CD4-positive, alpha-beta memory T cell (primary cell): ENCODE measurements at regions of chr9 and their contacts with region 1.

Region 1: DNA sequence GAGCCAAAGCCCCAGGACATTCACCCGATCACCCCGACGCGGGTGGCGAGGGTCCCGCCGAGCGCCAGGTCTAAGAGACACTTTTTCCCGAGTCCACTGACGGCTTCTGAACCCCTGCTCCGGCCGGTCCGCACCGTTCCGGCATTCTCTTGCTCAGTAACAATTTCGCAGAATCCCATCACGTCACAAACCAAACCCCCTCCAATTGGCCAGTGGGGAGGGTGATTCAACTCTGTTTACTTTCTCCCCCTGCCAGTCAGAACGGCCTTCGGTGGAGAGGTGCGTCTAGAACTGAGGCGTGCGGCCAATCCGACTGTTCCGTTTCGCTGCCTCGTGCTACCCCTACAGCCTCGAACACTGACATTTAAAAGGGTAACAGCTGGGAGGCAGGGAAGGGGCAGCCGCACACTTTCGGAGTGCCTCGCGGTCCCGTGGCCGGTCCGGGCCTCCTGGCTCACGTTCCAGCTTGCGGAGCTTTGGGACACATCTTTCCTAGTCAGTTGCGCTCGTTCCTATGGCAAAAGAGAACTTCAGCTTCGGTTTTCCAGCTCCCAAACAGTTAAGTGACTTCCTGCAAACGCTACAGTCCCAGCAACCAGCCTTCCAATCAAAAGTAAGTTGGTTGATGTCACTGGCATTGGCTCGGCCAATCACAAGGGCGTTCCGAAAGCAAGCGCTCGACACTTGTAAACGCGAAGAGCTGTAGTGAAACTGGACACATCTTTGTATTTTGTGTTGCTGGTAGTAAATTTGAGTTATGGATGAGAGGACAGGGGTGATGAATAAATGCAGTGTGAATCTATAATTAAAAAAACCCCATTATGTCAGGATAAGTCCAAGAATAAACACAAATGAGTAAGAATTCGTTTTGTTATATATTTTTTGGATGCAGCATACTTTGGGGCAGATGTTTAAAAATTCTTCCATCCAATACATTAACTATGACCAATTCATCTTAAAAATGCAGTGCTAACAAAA is at the start of gene KLF9:
- DNase-seq: peak; percentile 95 to 97 (median 96)
- H3K4me3 ChIP-seq: peak within 1 kb of the TSS in 1 of 2 donors; percentile 95
- H3K4me3 Mint-ChIP-seq: peak within 1 kb of the TSS; percentile 94 to 100 (median 96)
- H3K27ac ChIP-seq: peak within 1 kb of the TSS; percentile 98
- H3K27ac Mint-ChIP-seq: peak within 1 kb of the TSS; percentile 99 to 100 (median 100)
- H3K4me1 ChIP-seq: peaks cover 50% of the 10 kb centered on the region
- H3K4me1 Mint-ChIP-seq: peaks cover 28 to 63% (median 45%) of the 10 kb centered on the region in 4 donors
- H3K27me3 ChIP-seq: no peaks in the 10 kb centered on the region
- H3K27me3 Mint-ChIP-seq: peaks cover 0 to 2% of the 10 kb centered on the region in 2 donors
- total RNA-seq, gene KLF9: 18.6 to 20.6 TPM

Region 2: DNA sequence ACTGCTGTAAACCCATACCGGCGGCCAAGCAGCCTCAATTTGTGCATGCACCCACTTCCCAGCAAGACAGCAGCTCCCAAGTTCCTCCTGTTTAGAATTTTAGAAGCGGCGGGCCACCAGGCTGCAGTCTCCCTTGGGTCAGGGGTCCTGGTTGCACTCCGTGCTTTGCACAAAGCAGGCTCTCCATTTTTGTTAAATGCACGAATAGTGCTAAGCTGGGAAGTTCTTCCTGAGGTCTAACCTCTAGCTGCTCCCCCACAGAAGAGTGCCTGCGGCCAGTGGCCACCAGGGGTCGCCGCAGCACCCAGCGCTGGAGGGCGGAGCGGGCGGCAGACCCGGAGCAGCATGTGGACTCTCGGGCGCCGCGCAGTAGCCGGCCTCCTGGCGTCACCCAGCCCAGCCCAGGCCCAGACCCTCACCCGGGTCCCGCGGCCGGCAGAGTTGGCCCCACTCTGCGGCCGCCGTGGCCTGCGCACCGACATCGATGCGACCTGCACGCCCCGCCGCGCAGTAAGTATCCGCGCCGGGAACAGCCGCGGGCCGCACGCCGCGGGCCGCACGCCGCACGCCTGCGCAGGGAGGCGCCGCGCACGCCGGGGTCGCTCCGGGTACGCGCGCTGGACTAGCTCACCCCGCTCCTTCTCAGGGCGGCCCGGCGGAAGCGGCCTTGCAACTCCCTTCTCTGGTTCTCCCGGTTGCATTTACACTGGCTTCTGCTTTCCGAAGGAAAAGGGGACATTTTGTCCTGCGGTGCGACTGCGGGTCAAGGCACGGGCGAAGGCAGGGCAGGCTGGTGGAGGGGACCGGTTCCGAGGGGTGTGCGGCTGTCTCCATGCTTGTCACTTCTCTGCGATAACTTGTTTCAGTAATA is 1378.4 kb before region 1 on chr9 and contains the start of gene FXN:
- CTCF ChIA-PET with region 1: no interaction called
- POLR2A ChIA-PET with region 1: no interaction called
- intact Hi-C with region 1: loop called (anchors 10 kb)
- DNase-seq: peak; percentile 71 to 82 (median 78)
- H3K4me3 ChIP-seq: peak within 1 kb of the TSS; percentile 78 to 86
- H3K4me3 Mint-ChIP-seq: peak within 1 kb of the TSS; percentile 95 to 99 (median 98)
- H3K27ac ChIP-seq: peak within 1 kb of the TSS; percentile 60
- H3K27ac Mint-ChIP-seq: peak within 1 kb of the TSS; percentile 87 to 96 (median 94)
- H3K4me1 ChIP-seq: peaks cover 23% of the 10 kb centered on the region
- H3K4me1 Mint-ChIP-seq: peaks cover 18 to 36% (median 23%) of the 10 kb centered on the region in 4 donors
- H3K27me3 ChIP-seq: no peaks in the 10 kb centered on the region
- H3K27me3 Mint-ChIP-seq: no peaks in the 10 kb centered on the region
- total RNA-seq, gene FXN: 14.6 to 15.9 TPM

Region 3: DNA sequence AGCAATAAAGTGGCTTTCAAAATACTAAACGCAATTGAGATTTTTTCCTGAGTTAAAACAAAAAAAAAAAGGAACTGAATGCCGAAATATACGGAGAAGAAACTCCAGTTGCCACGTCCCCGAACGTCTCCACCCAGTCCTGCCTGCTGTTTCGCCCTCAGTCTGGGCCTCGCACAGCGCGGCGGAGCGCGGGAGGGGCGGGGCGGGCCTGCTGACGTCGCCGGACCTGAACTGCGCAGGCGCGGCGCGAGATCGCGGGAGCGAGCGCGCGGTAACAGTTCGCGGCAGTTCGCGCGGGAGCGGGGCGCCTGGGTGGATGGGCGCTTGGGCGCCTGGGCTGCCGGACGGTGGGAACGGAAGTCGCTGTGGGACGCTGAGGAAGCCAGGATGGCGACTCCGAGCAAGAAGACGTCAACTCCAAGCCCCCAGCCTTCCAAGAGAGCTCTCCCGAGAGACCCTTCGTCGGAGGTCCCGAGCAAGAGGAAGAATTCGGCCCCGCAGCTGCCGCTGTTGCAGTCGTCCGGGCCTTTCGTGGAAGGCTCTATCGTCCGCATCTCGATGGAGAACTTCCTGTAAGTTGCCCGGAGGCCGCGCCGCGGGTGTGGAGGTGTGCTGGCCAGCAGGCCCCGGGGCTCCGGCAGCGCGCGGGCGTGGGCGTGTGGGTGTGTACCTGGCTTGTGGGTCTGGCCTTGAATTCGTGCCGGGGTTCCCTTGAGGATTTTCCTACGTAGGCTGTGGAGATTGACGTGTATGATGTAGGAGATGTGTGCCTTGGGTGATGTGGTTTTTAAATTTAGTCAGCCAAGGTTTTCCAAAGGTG is 155.2 kb before region 1 on chr9 and contains the start of gene SMC5:
- CTCF ChIA-PET with region 1: no interaction called
- POLR2A ChIA-PET with region 1: interaction called, 21 read pairs
- intact Hi-C with region 1: loop called (anchors 1 kb)
- DNase-seq: peak; percentile 85 to 93 (median 92)
- H3K4me3 ChIP-seq: peak within 1 kb of the TSS; percentile 62 to 66
- H3K4me3 Mint-ChIP-seq: peak within 1 kb of the TSS; percentile 89 to 99 (median 96)
- H3K27ac ChIP-seq: peak within 1 kb of the TSS; percentile 95
- H3K27ac Mint-ChIP-seq: peak within 1 kb of the TSS; percentile 91 to 99 (median 97)
- H3K4me1 ChIP-seq: peaks cover 55% of the 10 kb centered on the region
- H3K4me1 Mint-ChIP-seq: peaks cover 44 to 65% (median 51%) of the 10 kb centered on the region in 4 donors
- H3K27me3 ChIP-seq: no peaks in the 10 kb centered on the region
- H3K27me3 Mint-ChIP-seq: no peaks in the 10 kb centered on the region
- total RNA-seq, gene SMC5: 43.7 to 48.3 TPM

Region 4: GRCh38 chr9:70374962-70375618 is 39.0 kb before region 1 on chr9:
- CTCF ChIA-PET with region 1: no interaction called
- POLR2A ChIA-PET with region 1: no interaction called
- intact Hi-C with region 1: loop called (anchors 5 kb)
- DNase-seq: no peak
- H3K4me3 ChIP-seq: no peak overlapping the region
- H3K4me3 Mint-ChIP-seq: no peak overlapping the region
- H3K27ac ChIP-seq: no peak overlapping the region
- H3K27ac Mint-ChIP-seq: peak overlapping the region in 2 of 7 donors; percentile 24 to 57
- H3K4me1 ChIP-seq: no peaks in the 10 kb centered on the region
- H3K4me1 Mint-ChIP-seq: peaks cover 0 to 2% (median under 1%) of the 10 kb centered on the region in 4 donors
- H3K27me3 ChIP-seq: no peaks in the 10 kb centered on the region
- H3K27me3 Mint-ChIP-seq: no peaks in the 10 kb centered on the region

Region 5: DNA sequence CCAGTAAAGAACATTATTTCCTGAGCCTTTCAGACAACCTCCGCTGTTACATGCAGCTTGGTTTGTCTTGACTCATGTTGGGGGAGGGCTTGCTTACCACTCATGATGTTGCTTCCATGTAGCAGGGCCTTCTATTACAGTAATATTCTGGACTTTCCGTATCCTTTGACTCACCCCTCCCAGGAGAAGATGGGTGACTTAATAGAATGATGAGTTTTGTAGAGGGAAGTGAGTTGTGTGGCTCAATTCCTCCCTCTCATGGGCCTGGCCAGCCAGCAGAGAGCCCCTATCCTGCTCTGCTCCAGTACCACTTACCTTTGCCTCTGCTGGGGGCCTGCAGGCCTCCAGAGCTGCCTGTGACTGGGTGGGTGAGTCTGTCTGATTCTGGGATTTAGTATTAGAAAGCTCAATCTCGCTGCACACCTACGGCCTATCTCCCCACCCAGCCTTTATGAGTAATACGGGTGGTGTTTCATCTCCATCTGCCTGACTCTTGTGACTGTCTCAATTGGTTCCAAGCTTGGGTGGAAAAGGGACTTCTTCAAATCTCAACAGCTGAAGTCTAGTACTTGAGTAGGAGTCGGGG is 53.0 kb after region 1 on chr9:
- CTCF ChIA-PET with region 1: no interaction called
- POLR2A ChIA-PET with region 1: interaction called, 27 read pairs
- intact Hi-C with region 1: no loop called
- DNase-seq: no peak
- H3K4me3 ChIP-seq: no peak overlapping the region
- H3K4me3 Mint-ChIP-seq: no peak overlapping the region
- H3K27ac ChIP-seq: no peak overlapping the region
- H3K27ac Mint-ChIP-seq: peak overlapping the region in 1 of 7 donors; percentile 36
- H3K4me1 ChIP-seq: peaks cover 23% of the 10 kb centered on the region
- H3K4me1 Mint-ChIP-seq: peaks cover 26 to 41% (median 36%) of the 10 kb centered on the region in 4 donors
- H3K27me3 ChIP-seq: no peaks in the 10 kb centered on the region
- H3K27me3 Mint-ChIP-seq: no peaks in the 10 kb centered on the region

Region 6: DNA sequence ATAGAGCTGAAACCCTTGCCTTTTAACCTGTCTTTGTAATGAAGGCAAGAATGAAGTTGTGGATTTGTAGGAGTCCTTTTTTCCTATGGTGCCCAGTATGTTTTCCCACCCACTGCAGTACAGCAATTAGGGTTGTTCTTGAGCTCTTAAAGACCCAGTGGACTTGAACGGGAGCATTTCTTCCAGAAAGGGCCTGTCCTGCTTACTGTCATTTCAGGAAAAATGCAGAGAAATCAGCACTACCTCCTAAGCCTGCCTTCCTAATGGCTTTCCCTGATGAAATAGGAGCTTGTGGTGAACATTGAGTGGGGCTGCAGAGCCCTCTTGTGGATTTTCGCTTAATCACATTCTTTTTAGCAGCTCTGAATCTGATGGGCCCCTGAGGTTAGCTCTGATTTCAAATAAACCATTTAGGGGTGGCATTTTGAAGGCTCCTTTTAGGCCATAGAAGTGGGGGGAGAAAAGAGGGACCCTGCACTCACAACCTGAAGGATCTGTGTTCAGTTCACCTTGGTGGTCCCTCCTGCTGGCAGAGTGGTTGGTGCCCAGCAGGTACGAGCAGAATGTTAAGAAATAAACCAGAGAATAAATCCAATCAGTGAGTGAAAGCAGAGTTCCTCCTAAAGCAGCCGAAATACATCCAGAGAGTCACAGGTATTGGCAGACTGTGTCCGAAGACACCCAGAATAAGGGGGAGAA is 188.4 kb after region 1 on chr9:
- CTCF ChIA-PET with region 1: interaction called, 7 read pairs
- POLR2A ChIA-PET with region 1: interaction called, 10 read pairs
- intact Hi-C with region 1: loop called (anchors 2 kb)
- DNase-seq: peak in 4 of 5 donors; percentile 43 to 60 (median 47)
- H3K4me3 ChIP-seq: no peak overlapping the region
- H3K4me3 Mint-ChIP-seq: no peak overlapping the region
- H3K27ac ChIP-seq: no peak overlapping the region
- H3K27ac Mint-ChIP-seq: peak overlapping the region in 1 of 7 donors; percentile 49
- H3K4me1 ChIP-seq: no peaks in the 10 kb centered on the region
- H3K4me1 Mint-ChIP-seq: no peaks in the 10 kb centered on the region
- H3K27me3 ChIP-seq: no peaks in the 10 kb centered on the region
- H3K27me3 Mint-ChIP-seq: peaks cover 0 to 1% of the 10 kb centered on the region in 2 donors

Region 7: DNA sequence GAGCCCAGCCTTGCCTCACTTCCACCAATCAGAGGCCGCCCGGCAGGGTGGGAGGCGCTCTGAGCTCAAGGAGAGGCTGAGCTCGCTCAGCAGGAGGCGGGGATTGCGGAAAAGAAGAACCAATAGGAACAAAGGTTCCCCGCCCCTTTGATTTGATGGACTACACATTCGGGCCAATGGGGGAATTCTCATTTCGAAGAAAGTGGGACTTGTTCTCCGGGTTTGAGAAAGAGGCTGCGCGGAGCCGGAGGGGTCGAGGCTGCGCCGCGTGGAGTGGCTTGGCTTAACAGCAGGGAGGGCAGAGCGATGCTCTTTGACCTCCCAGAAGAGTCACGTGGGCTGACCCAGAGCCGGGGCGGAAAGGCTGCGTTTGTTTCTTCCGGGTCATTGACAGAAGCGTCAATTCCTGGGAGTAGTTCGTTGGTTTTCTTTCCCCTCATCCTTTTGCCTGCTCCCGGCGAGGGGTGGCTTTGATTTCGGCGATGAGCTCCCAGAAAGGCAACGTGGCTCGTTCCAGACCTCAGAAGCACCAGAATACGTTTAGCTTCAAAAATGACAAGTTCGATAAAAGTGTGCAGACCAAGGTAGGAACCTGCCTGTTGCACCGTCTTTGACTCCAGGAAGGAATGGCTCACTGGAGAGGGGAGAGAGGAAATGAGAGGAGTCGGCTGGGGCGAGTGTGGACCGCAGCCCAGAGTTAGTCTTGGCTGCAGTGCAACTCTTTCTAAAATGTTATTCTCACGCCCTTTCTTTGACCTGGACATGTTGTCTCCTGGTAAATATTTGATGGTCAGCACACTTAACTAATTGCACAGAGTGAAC is 1497.4 kb after region 1 on chr9 and contains the start of gene C9orf85:
- CTCF ChIA-PET with region 1: no interaction called
- POLR2A ChIA-PET with region 1: no interaction called
- intact Hi-C with region 1: loop called (anchors 5 kb)
- DNase-seq: peak; percentile 94 to 98 (median 96)
- H3K4me3 ChIP-seq: peak within 1 kb of the TSS; percentile 77 to 83
- H3K4me3 Mint-ChIP-seq: peak within 1 kb of the TSS; percentile 99 to 100 (median 100)
- H3K27ac ChIP-seq: peak within 1 kb of the TSS; percentile 74
- H3K27ac Mint-ChIP-seq: peak within 1 kb of the TSS; percentile 92 to 100 (median 97)
- H3K4me1 ChIP-seq: peaks cover 51% of the 10 kb centered on the region
- H3K4me1 Mint-ChIP-seq: peaks cover 46 to 76% (median 54%) of the 10 kb centered on the region in 4 donors
- H3K27me3 ChIP-seq: no peaks in the 10 kb centered on the region
- H3K27me3 Mint-ChIP-seq: no peaks in the 10 kb centered on the region
- total RNA-seq, gene C9orf85: 8.2 to 10.6 TPM